ENCODE measurements at regions of chr11 and their contacts with region 1.

Region 1: GRCh38 chr11:117443266-117444195 is 115.9 kb downstream of the CEP164 start:
- DNase-seq: peak; percentile 52 to 80 (median 64)
- H3K4me3 ChIP-seq: no peak overlapping the region
- H3K27ac ChIP-seq: no peak overlapping the region
- H3K4me1 ChIP-seq: no peaks in the 10 kb centered on the region
- H3K27me3 ChIP-seq: no peaks in the 10 kb centered on the region
- CTCF ChIP-seq: peak; percentile 13 to 48 (median 17)
- EP300 ChIP-seq: no peak
- POLR2A ChIP-seq: no peak

Region 2: GRCh38 chr11:117817368-117818040 is 374.0 kb after region 1 on chr11:
- intact Hi-C with region 1: loop called in 1 of 4 experiments (anchors 5 kb)
- DNase-seq: peak; percentile 80 to 91 (median 90)
- H3K4me3 ChIP-seq: no peak overlapping the region
- H3K27ac ChIP-seq: no peak overlapping the region
- H3K4me1 ChIP-seq: peaks cover 3% of the 10 kb centered on the region
- H3K27me3 ChIP-seq: no peaks in the 10 kb centered on the region
- CTCF ChIP-seq: peak; percentile 90 to 98 (median 96)
- EP300 ChIP-seq: no peak
- POLR2A ChIP-seq: no peak